CD8-positive, alpha-beta T cell (primary cell): ENCODE measurements at regions of chr9 and their contacts with region 1.

Region 1: GRCh38 chr9:128191406-128192046 is at the start of gene CIZ1:
- DNase-seq: peak; percentile 42 to 87 (median 75)
- ATAC-seq: peak; percentile 80
- H3K4me3 ChIP-seq: peak within 1 kb of the TSS; percentile 77 to 78
- H3K4me3 Mint-ChIP-seq: peak within 1 kb of the TSS; percentile 94
- H3K27ac ChIP-seq: peak within 1 kb of the TSS; percentile 58 to 68
- H3K27ac Mint-ChIP-seq: peak within 1 kb of the TSS; percentile 92
- H3K4me1 ChIP-seq: peaks cover 16% of the 10 kb centered on the region
- H3K4me1 Mint-ChIP-seq: peaks cover 35% of the 10 kb centered on the region
- H3K27me3 ChIP-seq: no peaks in the 10 kb centered on the region
- H3K27me3 Mint-ChIP-seq: no peaks in the 10 kb centered on the region
- CTCF ChIP-seq: peak; percentile 65
- total RNA-seq, gene CIZ1: 109 to 116 TPM

Region 2: GRCh38 chr9:127525401-127526187 is 665.9 kb before region 1 on chr9:
- CTCF ChIA-PET with region 1: no interaction called
- POLR2A ChIA-PET with region 1: no interaction called
- intact Hi-C with region 1: no loop called
- DNase-seq: peak in 5 of 9 experiments; percentile 14 to 54 (median 23)
- ATAC-seq: no peak
- H3K4me3 ChIP-seq: no peak overlapping the region
- H3K4me3 Mint-ChIP-seq: no peak overlapping the region
- H3K27ac ChIP-seq: no peak overlapping the region
- H3K27ac Mint-ChIP-seq: no peak overlapping the region
- H3K4me1 ChIP-seq: no peaks in the 10 kb centered on the region
- H3K4me1 Mint-ChIP-seq: no peaks in the 10 kb centered on the region
- H3K27me3 ChIP-seq: no peaks in the 10 kb centered on the region
- H3K27me3 Mint-ChIP-seq: no peaks in the 10 kb centered on the region
- CTCF ChIP-seq: peak; percentile 57

Region 3: DNA sequence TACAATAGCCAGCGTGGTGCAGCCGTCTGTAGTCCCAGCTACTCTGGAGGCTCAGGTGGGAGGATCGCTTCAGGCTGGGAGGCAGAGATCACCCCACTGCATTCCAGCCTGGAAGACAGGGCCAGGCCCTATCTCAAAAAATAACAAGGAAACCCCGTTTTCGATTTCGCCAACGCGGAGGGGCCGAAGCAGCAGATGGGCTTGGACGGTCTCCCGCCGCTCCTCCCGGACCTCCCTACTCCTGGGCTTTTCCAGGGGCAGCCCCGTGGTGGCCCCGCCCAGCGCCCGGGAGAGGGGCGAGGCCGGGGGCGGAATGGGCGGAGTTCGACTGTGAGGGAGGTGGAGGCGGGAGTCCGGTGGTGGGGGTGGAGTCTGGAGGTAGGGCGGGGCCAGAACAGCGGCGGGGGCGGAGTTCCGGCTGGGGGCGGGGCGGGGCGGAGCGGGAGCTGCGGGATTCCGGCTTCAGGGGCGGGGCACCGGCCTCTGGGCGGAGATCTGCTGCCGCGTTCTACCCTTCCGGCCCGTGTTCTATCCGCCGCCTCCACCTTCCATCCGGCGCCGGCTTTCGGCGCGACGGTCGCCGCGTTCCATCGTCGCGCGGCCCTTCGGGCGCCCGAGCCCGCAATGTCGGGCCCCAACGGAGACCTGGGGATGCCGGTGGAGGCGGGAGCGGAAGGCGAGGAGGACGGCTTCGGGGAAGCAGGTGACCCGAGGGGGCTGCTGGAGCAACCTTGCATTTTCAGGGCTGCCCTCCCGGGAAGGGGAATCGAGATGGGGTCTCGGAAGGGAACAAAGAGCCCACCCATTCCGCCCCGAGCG is 31.5 kb before region 1 on chr9 and contains the start of gene BBLN:
- CTCF ChIA-PET with region 1: interaction called, 6 read pairs
- POLR2A ChIA-PET with region 1: interaction called, 10 read pairs
- intact Hi-C with region 1: loop called (anchors 1 kb)
- DNase-seq: peak; percentile 87 to 95 (median 93)
- ATAC-seq: peak; percentile 87
- H3K4me3 ChIP-seq: peak within 1 kb of the TSS; percentile 90 to 94
- H3K4me3 Mint-ChIP-seq: peak within 1 kb of the TSS; percentile 79
- H3K27ac ChIP-seq: peak within 1 kb of the TSS; percentile 70 to 86
- H3K27ac Mint-ChIP-seq: peak within 1 kb of the TSS; percentile 90
- H3K4me1 ChIP-seq: peaks cover 19% of the 10 kb centered on the region
- H3K4me1 Mint-ChIP-seq: peaks cover 17% of the 10 kb centered on the region
- H3K27me3 ChIP-seq: no peaks in the 10 kb centered on the region
- H3K27me3 Mint-ChIP-seq: no peaks in the 10 kb centered on the region
- CTCF ChIP-seq: no peak
- total RNA-seq, gene BBLN: 56.6 to 67.4 TPM

Region 4: DNA sequence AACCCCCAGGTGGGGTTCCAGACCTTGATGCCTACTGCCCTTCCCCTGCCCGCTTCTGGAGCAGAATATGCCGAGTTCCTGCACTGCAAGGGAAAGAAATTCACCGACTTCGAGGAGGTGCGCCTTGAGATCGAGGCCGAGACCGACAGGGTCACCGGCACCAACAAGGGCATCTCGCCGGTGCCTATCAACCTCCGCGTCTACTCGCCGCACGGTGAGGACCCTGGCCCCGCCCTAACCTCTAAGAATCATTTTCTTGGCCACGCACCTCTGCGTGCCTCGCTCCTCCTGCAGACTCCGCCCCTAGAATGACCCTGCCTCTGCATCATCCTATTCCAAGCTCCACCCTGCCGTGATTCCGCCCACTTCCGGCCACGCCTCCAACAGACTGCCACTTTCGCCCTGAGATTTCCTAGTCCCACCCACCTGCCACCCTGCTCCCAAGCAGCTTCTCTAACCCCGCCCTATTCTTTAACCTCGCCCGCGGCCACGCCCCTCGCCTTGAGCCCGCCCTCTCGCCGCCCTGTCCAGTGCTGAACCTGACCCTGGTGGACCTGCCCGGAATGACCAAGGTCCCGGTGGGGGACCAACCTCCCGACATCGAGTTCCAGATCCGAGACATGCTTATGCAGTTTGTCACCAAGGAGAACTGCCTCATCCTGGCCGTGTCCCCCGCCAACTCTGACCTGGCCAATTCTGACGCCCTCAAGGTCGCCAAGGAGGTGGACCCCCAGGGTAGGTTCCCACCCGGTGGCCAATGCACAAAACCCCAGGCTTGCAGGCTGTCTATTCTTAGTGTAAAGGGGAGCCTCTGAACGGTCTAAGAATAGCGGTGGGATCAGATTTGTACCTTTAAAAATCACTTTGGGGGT is 27.2 kb after region 1 on chr9:
- CTCF ChIA-PET with region 1: interaction called, 6 read pairs
- POLR2A ChIA-PET with region 1: no interaction called
- intact Hi-C with region 1: loop called in 1 of 2 experiments (anchors 1 kb)
- DNase-seq: peak; percentile 80 to 94 (median 90)
- ATAC-seq: peak; percentile 96
- H3K4me3 ChIP-seq: peak overlapping the region; percentile 57 to 64
- H3K4me3 Mint-ChIP-seq: peak overlapping the region; percentile 77
- H3K27ac ChIP-seq: no peak overlapping the region
- H3K27ac Mint-ChIP-seq: peak overlapping the region; percentile 19
- H3K4me1 ChIP-seq: peaks cover 14% of the 10 kb centered on the region
- H3K4me1 Mint-ChIP-seq: peaks cover 11% of the 10 kb centered on the region
- H3K27me3 ChIP-seq: no peaks in the 10 kb centered on the region
- H3K27me3 Mint-ChIP-seq: peaks cover 4% of the 10 kb centered on the region
- CTCF ChIP-seq: no peak

Region 5: GRCh38 chr9:128339771-128340690 is 148.5 kb after region 1 on chr9 and contains the start of gene SLC27A4:
- CTCF ChIA-PET with region 1: interaction called, 4 read pairs
- POLR2A ChIA-PET with region 1: no interaction called
- intact Hi-C with region 1: loop called (anchors 1 to 2 kb)
- DNase-seq: peak; percentile 52 to 92 (median 76)
- ATAC-seq: peak; percentile 92
- H3K4me3 ChIP-seq: peak within 1 kb of the TSS; percentile 73 to 83
- H3K4me3 Mint-ChIP-seq: peak within 1 kb of the TSS; percentile 96
- H3K27ac ChIP-seq: peak within 1 kb of the TSS; percentile 40 to 53
- H3K27ac Mint-ChIP-seq: peak within 1 kb of the TSS; percentile 85
- H3K4me1 ChIP-seq: peaks cover 14% of the 10 kb centered on the region
- H3K4me1 Mint-ChIP-seq: peaks cover 8% of the 10 kb centered on the region
- H3K27me3 ChIP-seq: no peaks in the 10 kb centered on the region
- H3K27me3 Mint-ChIP-seq: no peaks in the 10 kb centered on the region
- CTCF ChIP-seq: no peak
- total RNA-seq, gene SLC27A4: 2.2 to 2.4 TPM

Region 6: GRCh38 chr9:128396970-128397613 is 205.6 kb after region 1 on chr9:
- CTCF ChIA-PET with region 1: no interaction called
- POLR2A ChIA-PET with region 1: no interaction called
- intact Hi-C with region 1: no loop called
- DNase-seq: no peak
- ATAC-seq: no peak
- H3K4me3 ChIP-seq: no peak overlapping the region
- H3K4me3 Mint-ChIP-seq: no peak overlapping the region
- H3K27ac ChIP-seq: no peak overlapping the region
- H3K27ac Mint-ChIP-seq: peak overlapping the region; percentile 57
- H3K4me1 ChIP-seq: no peaks in the 10 kb centered on the region
- H3K4me1 Mint-ChIP-seq: no peaks in the 10 kb centered on the region
- H3K27me3 ChIP-seq: no peaks in the 10 kb centered on the region
- H3K27me3 Mint-ChIP-seq: peaks cover 2% of the 10 kb centered on the region
- CTCF ChIP-seq: no peak

Region 7: GRCh38 chr9:128420060-128420650 is 228.6 kb after region 1 on chr9:
- CTCF ChIA-PET with region 1: no interaction called
- POLR2A ChIA-PET with region 1: no interaction called
- intact Hi-C with region 1: loop called in 1 of 2 experiments (anchors 5 kb)
- DNase-seq: peak; percentile 24 to 84 (median 66)
- ATAC-seq: peak; percentile 76
- H3K4me3 ChIP-seq: peak overlapping the region; percentile 55 to 61
- H3K4me3 Mint-ChIP-seq: peak overlapping the region; percentile 78
- H3K27ac ChIP-seq: no peak overlapping the region
- H3K27ac Mint-ChIP-seq: no peak overlapping the region
- H3K4me1 ChIP-seq: peaks cover 14% of the 10 kb centered on the region
- H3K4me1 Mint-ChIP-seq: peaks cover 11% of the 10 kb centered on the region
- H3K27me3 ChIP-seq: peaks cover 0 to 10% of the 10 kb centered on the region in 2 experiments
- H3K27me3 Mint-ChIP-seq: peaks cover 23% of the 10 kb centered on the region
- CTCF ChIP-seq: peak; percentile 75

Region 8: DNA sequence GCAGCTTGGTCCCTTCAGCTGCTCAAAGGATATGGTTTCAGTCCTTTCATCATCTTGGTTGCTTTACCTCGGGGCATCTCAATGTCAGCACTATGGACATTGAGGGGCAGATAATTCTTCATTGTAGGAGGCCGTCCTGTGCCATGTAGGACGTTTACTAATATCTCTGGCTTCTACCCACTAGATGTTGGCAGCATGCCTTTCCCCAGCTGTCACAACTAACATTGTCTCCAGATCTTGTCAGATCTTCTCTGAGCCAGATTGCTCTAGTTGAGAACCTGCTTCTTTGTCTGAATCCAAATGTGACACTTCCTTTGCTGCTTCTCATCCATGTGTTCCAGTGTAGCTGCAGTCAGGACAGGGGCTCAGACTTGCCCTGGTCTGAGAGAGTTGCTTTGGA is 930.0 kb after region 1 on chr9:
- CTCF ChIA-PET with region 1: no interaction called
- POLR2A ChIA-PET with region 1: no interaction called
- intact Hi-C with region 1: no loop called
- DNase-seq: no peak
- ATAC-seq: no peak
- H3K4me3 ChIP-seq: no peak overlapping the region
- H3K4me3 Mint-ChIP-seq: no peak overlapping the region
- H3K27ac ChIP-seq: no peak overlapping the region
- H3K27ac Mint-ChIP-seq: no peak overlapping the region
- H3K4me1 ChIP-seq: no peaks in the 10 kb centered on the region
- H3K4me1 Mint-ChIP-seq: peaks cover 2% of the 10 kb centered on the region
- H3K27me3 ChIP-seq: no peaks in the 10 kb centered on the region
- H3K27me3 Mint-ChIP-seq: no peaks in the 10 kb centered on the region
- CTCF ChIP-seq: no peak